A549 (cell line): ENCODE measurements at regions of chr4 and their contacts with region 1.

Region 1: DNA sequence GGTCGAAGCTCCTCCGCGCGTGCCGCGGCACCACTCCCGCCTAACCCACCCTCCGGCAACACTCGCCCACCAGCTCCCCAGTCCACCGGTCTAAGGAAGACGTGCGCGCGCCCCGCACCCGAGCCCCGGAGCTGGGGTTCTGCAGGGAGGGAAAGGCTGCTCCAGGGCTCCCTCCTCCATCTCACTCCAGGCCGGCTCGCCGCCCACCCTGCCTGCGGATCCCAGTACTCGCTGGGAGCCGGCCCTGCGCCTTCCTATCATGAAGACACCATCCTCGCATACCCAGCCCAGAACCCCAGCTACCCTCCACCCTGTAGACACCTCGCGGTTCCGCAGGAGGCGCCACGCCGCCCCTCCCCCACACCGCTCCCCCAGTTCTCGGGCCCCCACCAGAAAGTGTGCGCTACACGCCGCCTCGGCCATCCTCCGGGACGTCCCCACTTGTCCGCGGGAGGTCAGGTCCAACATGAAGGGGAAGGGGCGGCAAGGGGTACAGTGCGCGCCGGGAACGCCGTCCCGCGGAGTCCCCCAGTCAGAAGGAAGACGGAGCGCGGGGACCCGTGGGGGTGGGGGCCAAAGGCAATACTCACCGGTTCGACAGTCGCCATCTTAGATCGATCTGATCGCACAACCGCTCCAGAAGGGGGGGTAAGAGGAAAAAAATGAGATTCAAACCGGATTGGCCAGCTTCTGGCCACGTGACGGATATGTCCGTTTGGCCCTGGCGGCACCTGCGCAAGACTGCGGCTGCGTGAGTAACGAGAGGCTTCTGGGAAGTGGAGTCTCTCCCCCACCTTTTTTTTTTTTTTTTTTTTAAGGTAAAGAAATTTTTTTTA is at the start of gene EIF4E:
- DNase-seq: peak; percentile 83 to 98
- ATAC-seq: peak; percentile 67 to 84
- H3K4me3 ChIP-seq: peak within 1 kb of the TSS; percentile 75
- H3K27ac ChIP-seq: peak within 1 kb of the TSS; percentile 92 to 100
- H3K4me1 ChIP-seq: peaks cover 17% of the 10 kb centered on the region
- CTCF ChIP-seq: no peak
- EP300 ChIP-seq: no peak
- POLR2A ChIP-seq: no peak; the same call in 1 of the 2 replicates
- RAD21 ChIP-seq: no peak
- polyA plus RNA-seq, gene EIF4E: 77.1 and 147 TPM in 2 replicates

Region 2: DNA sequence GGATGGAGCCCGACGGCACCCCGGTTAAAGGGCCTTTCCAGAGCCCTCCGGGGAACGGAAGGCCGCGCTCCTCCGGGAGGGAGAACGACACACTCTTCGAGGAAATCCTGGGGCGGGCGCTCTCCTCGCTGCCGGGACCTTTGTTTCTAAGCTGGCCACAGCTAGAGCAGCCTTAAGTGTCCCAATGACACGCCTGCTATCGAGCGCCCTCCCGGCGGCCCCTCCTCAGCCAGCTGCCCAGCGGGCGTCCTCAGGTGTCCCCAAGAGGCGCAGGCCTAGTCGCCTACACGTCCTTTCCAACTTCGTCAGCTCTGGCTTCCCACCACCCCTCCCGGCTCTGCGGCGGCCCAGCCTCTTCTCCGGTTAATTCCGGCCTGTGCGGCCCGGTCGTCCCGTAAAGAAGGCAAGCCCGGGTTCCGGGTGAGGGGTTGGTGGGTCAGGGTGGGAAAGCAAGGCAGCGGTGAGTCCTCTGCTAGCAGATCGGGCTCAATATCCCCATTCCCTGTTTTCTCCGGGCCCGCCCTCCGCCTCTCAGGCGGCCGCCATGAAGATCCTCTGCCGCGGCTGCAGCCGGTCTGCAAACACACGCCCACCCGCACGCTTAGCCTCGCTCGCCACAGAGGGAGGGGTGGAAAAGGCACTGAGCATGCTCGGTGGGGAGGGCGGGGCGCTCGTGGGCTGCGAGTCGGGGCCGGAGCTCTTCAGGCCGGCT is 668.0 kb before region 1 on chr4:
- CTCF ChIA-PET with region 1: no interaction called
- POLR2A ChIA-PET with region 1: interaction called, 15 read pairs
- DNase-seq: peak; percentile 82 to 95
- ATAC-seq: peak; percentile 82 to 92
- H3K4me3 ChIP-seq: peak overlapping the region; percentile 60
- H3K27ac ChIP-seq: peak overlapping the region; percentile 90 to 99
- H3K4me1 ChIP-seq: peaks cover 25% of the 10 kb centered on the region
- CTCF ChIP-seq: no peak
- EP300 ChIP-seq: no peak
- POLR2A ChIP-seq: peak; percentile 78
- RAD21 ChIP-seq: no peak

Region 3: DNA sequence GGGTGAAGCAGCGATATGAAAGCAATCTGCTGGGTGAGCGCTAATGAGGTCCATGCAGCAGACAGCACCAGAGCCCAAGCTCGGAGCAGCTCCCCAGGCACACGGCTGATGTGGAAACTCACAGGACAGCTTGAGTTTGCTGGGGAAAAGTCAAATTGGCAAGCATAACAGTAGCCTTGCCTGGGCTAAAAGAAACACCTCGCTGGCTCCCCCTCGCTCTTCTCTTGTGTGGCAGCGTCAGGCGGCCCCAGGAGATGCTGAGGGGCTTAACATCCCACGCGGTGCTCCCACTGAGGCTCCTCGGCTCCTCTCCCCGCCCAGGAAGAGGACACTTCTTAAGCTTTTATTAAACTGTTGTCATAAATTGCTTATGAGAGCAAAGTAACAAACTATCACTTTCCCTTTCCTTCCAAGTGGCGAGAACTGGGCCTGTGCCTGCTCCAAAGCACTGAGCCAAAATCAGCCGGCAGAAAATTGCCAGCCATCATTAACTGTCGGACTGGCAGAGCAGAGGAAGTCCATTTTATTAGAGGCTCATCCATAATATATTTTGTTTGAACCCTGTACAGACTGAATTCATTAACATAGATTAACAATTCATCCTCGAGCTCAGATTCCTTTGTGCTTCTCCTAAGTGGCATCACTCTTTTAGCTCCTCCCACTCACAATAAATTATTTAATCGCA is 381.7 kb before region 1 on chr4:
- CTCF ChIA-PET with region 1: no interaction called
- POLR2A ChIA-PET with region 1: no interaction called
- DNase-seq: no peak
- ATAC-seq: no peak
- H3K4me3 ChIP-seq: no peak overlapping the region
- H3K27ac ChIP-seq: no peak overlapping the region
- H3K4me1 ChIP-seq: no peaks in the 10 kb centered on the region
- CTCF ChIP-seq: no peak
- EP300 ChIP-seq: no peak
- POLR2A ChIP-seq: no peak
- RAD21 ChIP-seq: no peak

Region 4: GRCh38 chr4:98692411-98692810 is 236.3 kb before region 1 on chr4:
- CTCF ChIA-PET with region 1: no interaction called
- POLR2A ChIA-PET with region 1: no interaction called
- DNase-seq: no peak
- ATAC-seq: no peak
- H3K4me3 ChIP-seq: no peak overlapping the region
- H3K27ac ChIP-seq: no peak overlapping the region
- H3K4me1 ChIP-seq: peaks cover 8% of the 10 kb centered on the region; the same call in 2 of the 3 replicates
- CTCF ChIP-seq: no peak
- EP300 ChIP-seq: no peak
- POLR2A ChIP-seq: no peak
- RAD21 ChIP-seq: no peak

Region 5: GRCh38 chr4:98909646-98910401 is 18.9 kb before region 1 on chr4:
- CTCF ChIA-PET with region 1: interaction called, 3 read pairs
- POLR2A ChIA-PET with region 1: interaction called, 19 read pairs
- DNase-seq: no peak
- ATAC-seq: no peak
- H3K4me3 ChIP-seq: no peak overlapping the region
- H3K27ac ChIP-seq: no peak overlapping the region
- H3K4me1 ChIP-seq: peaks cover 31% of the 10 kb centered on the region
- CTCF ChIP-seq: no peak
- EP300 ChIP-seq: no peak
- POLR2A ChIP-seq: no peak
- RAD21 ChIP-seq: no peak

Region 6: GRCh38 chr4:98976694-98977310 is 48.1 kb after region 1 on chr4:
- CTCF ChIA-PET with region 1: no interaction called
- POLR2A ChIA-PET with region 1: interaction called, 14 read pairs
- DNase-seq: no peak
- ATAC-seq: no peak
- H3K4me3 ChIP-seq: no peak overlapping the region
- H3K27ac ChIP-seq: no peak overlapping the region
- H3K4me1 ChIP-seq: no peaks in the 10 kb centered on the region
- CTCF ChIP-seq: no peak
- EP300 ChIP-seq: no peak
- POLR2A ChIP-seq: no peak
- RAD21 ChIP-seq: no peak

Region 7: DNA sequence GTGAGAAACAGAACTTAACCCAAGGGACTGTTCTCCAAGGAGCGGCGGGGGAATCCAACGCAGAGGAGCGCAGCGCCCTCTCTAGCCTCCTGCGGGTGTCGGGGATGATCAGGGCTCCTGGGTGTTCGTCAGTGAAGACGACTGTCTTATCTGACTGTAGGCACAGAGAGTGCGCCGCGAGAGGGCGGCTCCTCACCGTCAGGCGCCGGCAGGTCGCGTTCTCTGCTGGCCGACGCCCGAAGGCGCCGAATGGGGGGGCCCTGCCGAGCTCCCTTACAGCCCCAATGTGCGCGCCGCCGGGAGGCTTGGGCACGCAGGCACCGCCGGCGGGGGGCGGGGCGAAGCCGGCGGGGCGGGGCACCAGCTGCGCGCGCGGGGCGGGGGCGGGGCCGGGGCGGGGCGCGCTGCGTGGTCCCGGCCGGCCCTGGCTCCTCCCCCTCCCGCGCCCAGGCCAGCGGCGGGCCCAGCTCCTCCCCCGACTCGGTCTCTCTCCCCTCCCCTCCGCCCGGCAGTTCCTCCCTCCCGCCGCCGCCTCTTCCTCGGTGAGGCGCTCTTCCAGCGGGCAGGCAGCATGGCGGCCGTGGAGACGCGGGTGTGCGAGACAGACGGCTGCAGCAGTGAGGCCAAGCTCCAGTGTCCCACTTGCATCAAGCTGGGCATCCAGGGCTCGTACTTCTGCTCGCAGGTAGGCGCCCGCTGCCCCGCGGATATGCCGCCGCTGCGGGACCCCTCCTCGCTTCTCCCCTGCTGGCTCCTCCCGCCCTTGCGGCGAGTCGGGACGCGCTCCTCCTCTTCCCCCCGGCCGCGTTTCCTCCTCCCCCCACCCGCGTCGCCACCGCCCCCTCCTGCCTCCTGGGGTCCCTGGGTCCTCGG is 66.7 kb after region 1 on chr4 and contains the start of gene METAP1:
- CTCF ChIA-PET with region 1: interaction called, 3 read pairs
- POLR2A ChIA-PET with region 1: interaction called, 37 read pairs
- DNase-seq: peak; percentile 82 to 95
- ATAC-seq: peak; percentile 96
- H3K4me3 ChIP-seq: peak within 1 kb of the TSS; percentile 91
- H3K27ac ChIP-seq: peak within 1 kb of the TSS; percentile 93 to 99
- H3K4me1 ChIP-seq: peaks cover 25% of the 10 kb centered on the region; the same call in 2 of the 3 replicates
- CTCF ChIP-seq: peak; percentile 82
- EP300 ChIP-seq: no peak
- POLR2A ChIP-seq: peak; percentile 88
- RAD21 ChIP-seq: peak; percentile 73 to 89
- polyA plus RNA-seq, gene METAP1: 76.8 and 106 TPM in 2 replicates

Region 8: DNA sequence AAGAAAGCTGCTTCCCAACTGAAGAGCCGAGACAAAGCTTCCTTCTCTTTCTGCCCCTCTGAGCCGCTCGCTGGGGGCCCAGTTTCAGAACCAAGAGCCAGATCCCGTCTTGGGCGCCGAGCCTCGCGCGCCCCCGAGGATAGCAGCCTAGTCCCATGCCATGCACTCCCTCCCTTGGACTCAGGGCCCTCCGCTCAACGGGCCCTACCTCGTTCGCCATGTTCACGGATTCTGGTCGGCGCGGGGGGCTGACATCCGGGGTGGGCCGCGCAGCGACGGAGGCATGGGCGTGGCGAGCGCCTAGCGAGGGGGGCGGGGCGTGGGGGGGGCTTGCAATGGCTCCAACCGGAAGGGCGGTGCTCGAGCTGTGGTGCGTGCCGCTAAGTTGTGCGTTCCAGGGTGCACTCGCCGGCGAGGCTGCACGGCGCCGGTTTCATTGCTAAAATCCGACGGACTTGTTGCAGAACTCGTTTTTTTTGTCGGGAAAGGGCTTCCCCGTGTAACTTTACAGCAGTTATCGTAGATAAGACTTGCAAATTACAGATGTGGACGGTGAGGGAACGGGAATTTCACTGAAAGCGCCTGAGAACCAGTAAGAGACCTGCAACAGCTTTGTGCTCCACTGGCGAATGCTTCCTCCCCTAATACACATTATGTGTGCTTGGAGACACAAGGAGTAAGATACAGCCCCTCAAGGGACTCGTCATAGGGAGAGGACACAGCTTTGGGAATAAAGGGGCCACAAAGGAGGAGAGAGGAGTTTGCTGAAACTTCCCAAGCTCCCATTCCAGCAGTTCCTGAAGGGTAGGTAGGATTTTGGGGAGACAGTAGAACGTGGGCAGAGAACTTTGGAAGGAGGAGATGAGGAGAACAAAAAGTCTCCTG is 160.0 kb after region 1 on chr4 and contains the start of gene ADH5:
- CTCF ChIA-PET with region 1: no interaction called
- POLR2A ChIA-PET with region 1: interaction called, 14 read pairs
- DNase-seq: peak; percentile 74 to 81
- ATAC-seq: peak; percentile 96
- H3K4me3 ChIP-seq: peak within 1 kb of the TSS; percentile 95
- H3K27ac ChIP-seq: peak within 1 kb of the TSS; percentile 93 to 99
- H3K4me1 ChIP-seq: peaks cover 16% of the 10 kb centered on the region
- CTCF ChIP-seq: no peak
- EP300 ChIP-seq: no peak
- POLR2A ChIP-seq: peak; percentile 91
- RAD21 ChIP-seq: no peak
- polyA plus RNA-seq, gene ADH5: 134 and 152 TPM in 2 replicates